Calu3 (cell line): ENCODE measurements at regions of chr14 and their contacts with region 1.

Region 1: DNA sequence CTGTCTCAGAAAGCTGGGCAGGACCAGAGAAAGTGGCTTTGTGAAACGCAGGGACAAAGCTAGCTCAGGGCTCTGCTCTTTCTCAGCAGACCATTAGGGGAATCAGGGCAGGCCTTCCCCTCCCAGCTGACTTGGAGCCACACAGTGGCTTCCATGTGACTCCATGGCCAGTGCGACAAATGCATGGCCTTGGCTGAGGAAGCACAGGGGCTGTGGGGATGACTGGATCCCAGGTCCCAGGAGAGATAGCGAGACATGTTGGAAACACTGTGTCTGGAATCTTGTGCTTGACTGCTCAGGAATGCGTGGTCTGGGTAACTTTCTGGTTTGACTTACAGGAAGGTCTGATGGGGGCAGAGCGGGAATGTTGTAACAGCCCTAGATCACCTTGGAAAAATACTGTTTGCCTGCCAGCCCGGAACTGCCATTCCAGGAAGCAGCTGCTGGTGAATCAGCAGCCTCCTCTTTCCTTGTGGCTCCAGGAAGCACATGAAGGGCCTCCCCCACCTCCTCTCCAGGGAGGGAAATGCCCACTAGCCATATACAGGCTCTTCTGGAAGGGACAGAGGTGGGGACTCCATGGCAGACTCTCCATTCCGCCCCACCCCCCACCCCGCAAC is 133.5 kb upstream of the HIF1A start:
- DNase-seq: peak; percentile 78
- H3K4me3 Mint-ChIP-seq: peak overlapping the region; percentile 31
- H3K27ac Mint-ChIP-seq: peak overlapping the region; percentile 99
- H3K4me1 Mint-ChIP-seq: peaks cover 73% of the 10 kb centered on the region
- H3K27me3 Mint-ChIP-seq: no peaks in the 10 kb centered on the region
- CTCF ChIP-seq: no peak

Region 2: DNA sequence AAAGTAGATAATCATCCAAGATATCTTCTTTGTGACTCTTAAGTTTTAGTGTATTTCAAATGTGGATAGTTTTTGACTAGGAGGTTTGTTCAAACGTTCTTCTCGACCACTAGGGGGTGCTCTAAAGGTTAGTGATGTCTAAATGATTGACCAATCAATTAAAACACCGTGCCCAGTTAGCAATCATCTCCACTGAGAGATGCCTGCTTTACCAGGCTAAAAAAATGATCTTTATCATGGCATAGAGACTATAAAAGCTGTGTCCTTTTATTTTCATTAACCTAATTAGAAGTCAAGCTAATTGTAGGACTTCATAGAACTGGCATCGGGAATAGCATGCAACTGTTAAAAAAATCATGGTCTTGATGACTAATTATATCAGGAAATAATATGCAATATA is 86.5 kb before region 1 on chr14:
- CTCF ChIA-PET with region 1: interaction called, 16 read pairs
- intact Hi-C with region 1: no loop called
- DNase-seq: peak; percentile 41
- H3K4me3 Mint-ChIP-seq: no peak overlapping the region
- H3K27ac Mint-ChIP-seq: peak overlapping the region; percentile 61
- H3K4me1 Mint-ChIP-seq: peaks cover 86% of the 10 kb centered on the region
- H3K27me3 Mint-ChIP-seq: no peaks in the 10 kb centered on the region
- CTCF ChIP-seq: peak; percentile 70

Region 3: GRCh38 chr14:61644834-61645233 is 83.1 kb after region 1 on chr14:
- CTCF ChIA-PET with region 1: interaction called, 4 read pairs
- intact Hi-C with region 1: loop called (anchors 5 kb)
- DNase-seq: no peak
- H3K4me3 Mint-ChIP-seq: no peak overlapping the region
- H3K27ac Mint-ChIP-seq: no peak overlapping the region
- H3K4me1 Mint-ChIP-seq: peaks cover 7% of the 10 kb centered on the region
- H3K27me3 Mint-ChIP-seq: no peaks in the 10 kb centered on the region
- CTCF ChIP-seq: no peak

Region 4: DNA sequence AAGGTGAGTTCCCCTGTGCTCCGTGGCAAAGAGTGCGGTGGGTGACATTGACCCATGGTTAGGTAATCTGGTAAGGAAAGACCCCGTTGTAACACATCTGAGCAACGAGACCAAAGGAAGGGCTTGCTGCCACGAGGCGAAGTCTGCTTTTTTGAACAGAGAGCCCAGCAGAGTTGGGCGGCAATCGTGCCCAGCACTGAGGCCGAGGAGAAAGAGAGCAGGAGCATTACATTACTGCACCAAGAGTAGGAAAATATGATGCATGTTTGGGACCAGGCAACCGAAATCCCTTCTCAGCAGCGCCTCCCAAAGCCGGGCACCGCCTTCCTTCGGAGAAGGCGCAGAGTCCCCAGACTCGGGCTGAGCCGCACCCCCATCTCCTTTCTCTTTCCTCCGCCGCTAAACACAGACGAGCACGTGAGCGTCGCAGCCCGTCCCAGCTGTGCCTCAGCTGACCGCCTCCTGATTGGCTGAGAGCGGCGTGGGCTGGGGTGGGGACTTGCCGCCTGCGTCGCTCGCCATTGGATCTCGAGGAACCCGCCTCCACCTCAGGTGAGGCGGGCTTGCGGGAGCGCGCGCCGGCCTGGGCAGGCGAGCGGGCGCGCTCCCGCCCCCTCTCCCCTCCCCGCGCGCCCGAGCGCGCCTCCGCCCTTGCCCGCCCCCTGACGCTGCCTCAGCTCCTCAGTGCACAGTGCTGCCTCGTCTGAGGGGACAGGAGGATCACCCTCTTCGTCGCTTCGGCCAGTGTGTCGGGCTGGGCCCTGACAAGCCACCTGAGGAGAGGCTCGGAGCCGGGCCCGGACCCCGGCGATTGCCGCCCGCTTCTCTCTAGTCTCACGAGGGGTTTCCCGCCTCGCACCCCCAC is 133.3 kb after region 1 on chr14 and contains the start of gene HIF1A:
- CTCF ChIA-PET with region 1: interaction called, 8 read pairs
- intact Hi-C with region 1: loop called (anchors 2 kb)
- DNase-seq: peak; percentile 96
- H3K4me3 Mint-ChIP-seq: peak within 1 kb of the TSS; percentile 89
- H3K27ac Mint-ChIP-seq: peak within 1 kb of the TSS; percentile 93
- H3K4me1 Mint-ChIP-seq: peaks cover 2% of the 10 kb centered on the region
- H3K27me3 Mint-ChIP-seq: no peaks in the 10 kb centered on the region
- CTCF ChIP-seq: no peak
- total RNA-seq, gene HIF1A: 213 and 229 TPM in 2 replicates

Region 5: GRCh38 chr14:61750708-61751474 is 189.1 kb after region 1 on chr14:
- CTCF ChIA-PET with region 1: no interaction called
- intact Hi-C with region 1: loop called (anchors 1 kb)
- DNase-seq: peak; percentile 89
- H3K4me3 Mint-ChIP-seq: peak overlapping the region; percentile 74
- H3K27ac Mint-ChIP-seq: peak overlapping the region; percentile 70
- H3K4me1 Mint-ChIP-seq: peaks cover 40% of the 10 kb centered on the region
- H3K27me3 Mint-ChIP-seq: no peaks in the 10 kb centered on the region
- CTCF ChIP-seq: no peak